ENCODE measurements at regions of chr10 and their contacts with region 1.

Region 1: GRCh38 chr10:72048450-72049124 is 39.8 kb downstream of the SPOCK2 start:
- DNase-seq: peak; percentile 95
- ATAC-seq: peak; percentile 98
- H3K4me3 Mint-ChIP-seq: no peak overlapping the region
- H3K27ac Mint-ChIP-seq: no peak overlapping the region
- H3K4me1 Mint-ChIP-seq: peaks cover 15% of the 10 kb centered on the region
- H3K27me3 Mint-ChIP-seq: no peaks in the 10 kb centered on the region
- CTCF ChIP-seq: peak; percentile 97

Region 2: DNA sequence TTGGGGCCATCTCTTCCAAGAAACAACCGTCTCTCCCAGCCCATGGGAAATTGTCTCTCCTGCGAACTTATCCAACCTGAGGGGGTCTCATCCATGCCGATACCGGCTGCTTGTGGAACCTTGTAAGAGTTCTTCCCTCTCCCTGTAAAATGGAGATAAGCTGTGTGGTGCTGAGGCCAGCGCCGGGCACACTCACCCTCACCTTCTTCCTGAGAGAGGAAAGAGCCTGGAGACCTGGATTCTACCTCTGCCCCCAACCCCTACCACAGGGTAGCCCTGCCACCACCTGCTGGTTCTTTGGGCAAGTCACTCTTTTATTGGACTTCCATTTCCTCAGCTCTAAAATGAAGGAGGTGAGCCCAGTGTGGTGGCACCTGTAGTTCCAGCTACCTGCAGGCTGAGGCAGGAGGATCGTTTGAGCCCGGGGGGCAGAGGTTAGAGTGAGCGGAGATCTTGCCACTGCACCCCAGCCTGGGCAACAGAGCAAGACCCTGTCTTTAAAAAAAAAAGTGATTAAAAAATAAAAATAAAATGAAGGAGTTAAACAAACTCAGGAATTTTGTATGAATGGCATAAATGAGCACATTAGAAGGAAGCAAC is 159.1 kb before region 1 on chr10:
- CTCF ChIA-PET with region 1: interaction called, 129 read pairs
- POLR2A ChIA-PET with region 1: no interaction called
- intact Hi-C with region 1: no loop called
- DNase-seq: no peak
- ATAC-seq: no peak
- H3K4me3 Mint-ChIP-seq: peak overlapping the region; percentile 78
- H3K27ac Mint-ChIP-seq: peak overlapping the region; percentile 65
- H3K4me1 Mint-ChIP-seq: peaks cover 10% of the 10 kb centered on the region
- H3K27me3 Mint-ChIP-seq: peaks cover 5% of the 10 kb centered on the region
- CTCF ChIP-seq: no peak

Region 3: GRCh38 chr10:71957546-71958275 is 90.9 kb before region 1 on chr10:
- CTCF ChIA-PET with region 1: interaction called, 17 read pairs
- POLR2A ChIA-PET with region 1: no interaction called
- intact Hi-C with region 1: no loop called
- DNase-seq: no peak
- ATAC-seq: no peak
- H3K4me3 Mint-ChIP-seq: no peak overlapping the region
- H3K27ac Mint-ChIP-seq: no peak overlapping the region
- H3K4me1 Mint-ChIP-seq: no peaks in the 10 kb centered on the region
- H3K27me3 Mint-ChIP-seq: peaks cover 12% of the 10 kb centered on the region
- CTCF ChIP-seq: no peak

Region 4: GRCh38 chr10:72061491-72061890 is 12.9 kb after region 1 on chr10:
- CTCF ChIA-PET with region 1: interaction called, 72 read pairs
- POLR2A ChIA-PET with region 1: interaction called, 5 read pairs
- intact Hi-C with region 1: no loop called
- DNase-seq: no peak
- ATAC-seq: no peak
- H3K4me3 Mint-ChIP-seq: no peak overlapping the region
- H3K27ac Mint-ChIP-seq: peak overlapping the region; percentile 3
- H3K4me1 Mint-ChIP-seq: peaks cover 30% of the 10 kb centered on the region
- H3K27me3 Mint-ChIP-seq: no peaks in the 10 kb centered on the region
- CTCF ChIP-seq: no peak

Region 5: GRCh38 chr10:72099054-72099921 is 50.7 kb after region 1 on chr10:
- CTCF ChIA-PET with region 1: no interaction called
- POLR2A ChIA-PET with region 1: no interaction called
- intact Hi-C with region 1: no loop called
- DNase-seq: no peak
- ATAC-seq: no peak
- H3K4me3 Mint-ChIP-seq: no peak overlapping the region
- H3K27ac Mint-ChIP-seq: no peak overlapping the region
- H3K4me1 Mint-ChIP-seq: peaks cover 55% of the 10 kb centered on the region
- H3K27me3 Mint-ChIP-seq: no peaks in the 10 kb centered on the region
- CTCF ChIP-seq: no peak

Region 6: DNA sequence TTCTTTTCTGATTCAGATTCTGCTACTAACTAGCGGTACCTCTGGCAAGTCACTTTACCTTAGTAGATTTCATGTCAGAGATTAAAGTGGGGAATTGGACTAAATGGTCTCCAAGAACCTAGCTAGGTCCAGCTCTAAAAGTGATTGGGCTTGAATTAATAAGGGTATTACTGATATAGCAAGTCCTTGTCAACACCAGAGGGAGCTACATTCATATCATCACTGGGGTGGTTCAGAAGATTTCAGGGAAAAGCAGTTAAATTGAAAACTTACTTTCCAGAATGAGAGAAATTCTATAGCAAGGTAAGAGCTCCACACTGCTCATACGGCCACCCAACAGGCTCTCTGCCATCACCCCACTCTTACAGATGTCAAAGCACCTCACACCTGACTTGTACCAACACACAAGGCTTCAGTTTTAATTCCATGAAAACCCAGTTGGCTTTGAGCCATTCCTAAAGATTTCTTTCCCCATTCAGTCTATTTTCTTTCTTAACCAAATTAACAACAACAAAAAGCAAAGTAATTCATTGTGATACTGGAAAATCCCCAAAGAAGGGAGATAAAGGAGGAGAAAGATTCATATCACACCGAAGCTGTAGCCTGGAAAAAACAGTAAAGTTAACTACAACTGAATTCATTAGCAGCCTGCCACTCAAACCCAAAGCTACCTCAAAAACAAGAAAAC is 77.7 kb after region 1 on chr10:
- CTCF ChIA-PET with region 1: interaction called, 14 read pairs
- POLR2A ChIA-PET with region 1: no interaction called
- intact Hi-C with region 1: no loop called
- DNase-seq: no peak
- ATAC-seq: no peak
- H3K4me3 Mint-ChIP-seq: no peak overlapping the region
- H3K27ac Mint-ChIP-seq: no peak overlapping the region
- H3K4me1 Mint-ChIP-seq: peaks cover 30% of the 10 kb centered on the region
- H3K27me3 Mint-ChIP-seq: no peaks in the 10 kb centered on the region
- CTCF ChIP-seq: peak; percentile 28

Region 7: DNA sequence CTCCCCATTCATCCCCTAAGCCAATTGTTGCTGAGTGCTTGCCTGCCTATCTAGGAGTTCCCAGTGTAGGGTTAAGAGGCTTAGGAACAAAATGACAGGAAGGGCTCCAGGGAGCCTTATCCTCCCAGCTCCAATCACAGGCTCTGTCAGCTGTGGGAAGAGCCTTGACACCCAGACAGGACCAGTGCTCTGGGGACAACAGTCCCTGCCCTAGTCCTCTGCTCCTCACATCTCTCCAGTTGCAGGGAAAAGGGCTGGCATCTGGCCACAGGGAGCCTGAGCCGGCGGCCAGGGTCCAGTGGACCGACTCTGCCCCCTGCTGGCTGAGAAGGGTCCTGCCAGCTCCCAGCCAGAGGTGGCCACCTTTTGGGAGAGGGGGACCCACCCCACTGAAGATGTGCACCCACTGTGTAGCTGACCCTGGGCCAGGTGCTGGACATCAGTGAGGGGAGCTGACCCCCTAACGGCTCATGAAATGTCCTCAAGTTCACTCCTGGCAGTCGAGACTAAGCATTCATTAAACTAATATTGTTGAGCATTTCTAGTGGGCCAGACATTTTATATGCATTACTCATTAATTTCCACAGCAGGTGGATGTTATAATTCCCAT is 288.5 kb after region 1 on chr10:
- CTCF ChIA-PET with region 1: interaction called, 73 read pairs
- POLR2A ChIA-PET with region 1: interaction called, 4 read pairs
- intact Hi-C with region 1: no loop called
- DNase-seq: peak; percentile 71
- ATAC-seq: no peak
- H3K4me3 Mint-ChIP-seq: no peak overlapping the region
- H3K27ac Mint-ChIP-seq: peak overlapping the region; percentile 84
- H3K4me1 Mint-ChIP-seq: peaks cover 63% of the 10 kb centered on the region
- H3K27me3 Mint-ChIP-seq: no peaks in the 10 kb centered on the region
- CTCF ChIP-seq: peak; percentile 100

Region 8: GRCh38 chr10:72567884-72568640 is 519.5 kb after region 1 on chr10:
- CTCF ChIA-PET with region 1: no interaction called
- POLR2A ChIA-PET with region 1: no interaction called
- intact Hi-C with region 1: no loop called
- DNase-seq: no peak
- ATAC-seq: no peak
- H3K4me3 Mint-ChIP-seq: no peak overlapping the region
- H3K27ac Mint-ChIP-seq: no peak overlapping the region
- H3K4me1 Mint-ChIP-seq: peaks cover 17% of the 10 kb centered on the region
- H3K27me3 Mint-ChIP-seq: no peaks in the 10 kb centered on the region
- CTCF ChIP-seq: peak; percentile 36